IMR-90 (cell line): ENCODE measurements at regions of chr12 and their contacts with region 1.

Region 1: GRCh38 chr12:79555028-79555930 is 135.5 kb downstream of the PAWR start:
- DNase-seq: peak; percentile 79
- ATAC-seq: peak; percentile 75
- H3K4me3 ChIP-seq: no peak overlapping the region
- H3K27ac ChIP-seq: no peak overlapping the region; the same call in 1 of the 2 replicates
- H3K4me1 ChIP-seq: peaks cover 15% of the 10 kb centered on the region; the same call in 1 of the 2 replicates
- H3K27me3 ChIP-seq: no peaks in the 10 kb centered on the region
- CTCF ChIP-seq: peak; percentile 89
- POLR2A ChIP-seq: no peak; the same call in 1 of the 2 replicates
- RAD21 ChIP-seq: peak; percentile 87

Region 2: DNA sequence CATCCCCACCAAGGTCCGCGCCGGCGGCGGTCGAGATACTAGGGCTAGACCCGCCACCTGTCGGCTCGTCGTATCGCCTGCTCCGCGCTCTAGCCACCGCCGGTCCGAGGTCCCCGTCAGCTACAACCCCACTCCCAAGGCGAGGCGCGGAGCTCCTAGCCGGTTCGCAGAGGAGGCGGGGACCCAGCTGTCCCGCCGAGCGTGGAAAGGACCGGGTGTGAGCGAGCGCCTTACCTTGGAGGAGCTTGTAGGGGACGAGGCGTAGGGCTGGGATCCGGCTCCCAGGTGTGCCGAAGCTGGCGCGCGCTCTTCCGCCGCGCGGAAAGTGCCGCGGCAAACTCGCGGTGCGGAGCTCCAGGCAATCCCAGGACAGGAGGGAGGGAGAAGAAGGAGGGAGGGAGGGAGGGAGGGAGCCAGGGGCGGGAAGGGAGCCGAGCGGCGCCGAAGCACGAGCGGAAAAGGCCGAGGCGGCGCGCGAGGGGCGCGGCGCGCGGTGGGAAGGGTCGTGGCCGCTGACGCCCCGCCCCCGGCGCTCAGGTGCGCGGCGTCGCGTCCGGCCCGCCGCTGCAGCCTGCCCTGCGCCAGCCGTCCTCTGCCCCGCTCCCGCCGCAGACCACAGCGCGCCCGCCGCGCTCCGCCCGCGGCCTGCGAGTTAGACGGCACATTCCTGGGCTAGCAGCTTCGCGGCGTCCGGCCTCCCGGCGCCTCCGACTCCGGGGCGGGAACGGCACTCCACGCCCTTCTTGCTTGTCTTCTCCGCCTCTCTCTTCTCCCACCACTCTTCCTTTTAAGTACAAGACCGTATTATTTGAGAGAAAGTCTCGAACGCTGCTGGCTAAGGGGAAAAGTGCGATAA is 135.6 kb after region 1 on chr12 and contains the start of gene PAWR:
- CTCF ChIA-PET with region 1: no interaction called
- POLR2A ChIA-PET with region 1: no interaction called
- dilution Hi-C with region 1: no loop called
- in situ Hi-C with region 1: no loop called
- intact Hi-C with region 1: loop called (anchors 2 kb)
- DNase-seq: peak; percentile 93
- ATAC-seq: peak; percentile 60
- H3K4me3 ChIP-seq: peak within 1 kb of the TSS; percentile 96
- H3K27ac ChIP-seq: peak within 1 kb of the TSS; percentile 79
- H3K4me1 ChIP-seq: peaks cover 12% of the 10 kb centered on the region; the same call in 1 of the 2 replicates
- H3K27me3 ChIP-seq: no peaks in the 10 kb centered on the region
- CTCF ChIP-seq: peak; percentile 30
- POLR2A ChIP-seq: peak; percentile 80
- RAD21 ChIP-seq: no peak
- total RNA-seq, gene PAWR: 13.6 and 34.4 TPM in 2 replicates

Region 3: GRCh38 chr12:79886917-79887519 is 331.7 kb after region 1 on chr12:
- CTCF ChIA-PET with region 1: no interaction called
- POLR2A ChIA-PET with region 1: no interaction called
- dilution Hi-C with region 1: no loop called
- in situ Hi-C with region 1: no loop called
- intact Hi-C with region 1: loop called (anchors 5 kb)
- DNase-seq: peak; percentile 66
- ATAC-seq: peak; percentile 69
- H3K4me3 ChIP-seq: no peak overlapping the region
- H3K27ac ChIP-seq: no peak overlapping the region
- H3K4me1 ChIP-seq: peaks cover 2% of the 10 kb centered on the region
- H3K27me3 ChIP-seq: no peaks in the 10 kb centered on the region
- CTCF ChIP-seq: peak; percentile 57
- POLR2A ChIP-seq: no peak
- RAD21 ChIP-seq: peak; percentile 60

Region 4: DNA sequence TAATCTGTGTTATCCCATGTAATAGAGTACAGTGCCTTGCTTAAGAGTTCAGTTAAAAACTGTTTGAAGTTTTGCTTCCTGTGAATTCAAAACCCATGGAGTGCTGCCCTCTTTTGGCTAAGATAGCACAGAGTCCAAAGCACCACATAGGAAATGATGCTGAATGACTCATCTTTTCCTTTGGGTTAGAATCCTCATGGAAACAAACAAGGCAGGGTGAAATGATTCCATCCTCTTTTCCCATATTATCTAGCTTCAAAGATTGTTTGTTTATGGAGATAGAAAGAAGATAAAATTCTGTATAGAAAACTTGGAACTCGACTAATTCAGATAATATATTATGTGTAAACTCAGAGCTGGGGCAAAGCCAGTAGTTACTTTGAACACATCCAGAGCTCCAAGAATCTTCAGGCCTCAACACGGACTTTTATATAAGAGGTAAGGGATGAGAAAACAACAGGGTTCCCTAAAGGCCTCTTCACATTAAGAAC is 631.5 kb after region 1 on chr12:
- CTCF ChIA-PET with region 1: interaction called, 3 read pairs
- POLR2A ChIA-PET with region 1: no interaction called
- dilution Hi-C with region 1: no loop called
- in situ Hi-C with region 1: loop called (anchors 5 kb)
- intact Hi-C with region 1: loop called (anchors 1 kb)
- DNase-seq: peak; percentile 97
- ATAC-seq: peak; percentile 86
- H3K4me3 ChIP-seq: no peak overlapping the region
- H3K27ac ChIP-seq: peak overlapping the region; percentile 77
- H3K4me1 ChIP-seq: peaks cover 17% of the 10 kb centered on the region
- H3K27me3 ChIP-seq: no peaks in the 10 kb centered on the region
- CTCF ChIP-seq: peak; percentile 93
- POLR2A ChIP-seq: peak; percentile 55; the same call in 1 of the 2 replicates
- RAD21 ChIP-seq: peak; percentile 92

Region 5: GRCh38 chr12:80412369-80412953 is 857.2 kb after region 1 on chr12:
- CTCF ChIA-PET with region 1: no interaction called
- POLR2A ChIA-PET with region 1: no interaction called
- dilution Hi-C with region 1: no loop called
- in situ Hi-C with region 1: no loop called
- intact Hi-C with region 1: loop called (anchors 10 kb)
- DNase-seq: peak; percentile 69
- ATAC-seq: peak; percentile 81
- H3K4me3 ChIP-seq: no peak overlapping the region
- H3K27ac ChIP-seq: no peak overlapping the region
- H3K4me1 ChIP-seq: no peaks in the 10 kb centered on the region
- H3K27me3 ChIP-seq: no peaks in the 10 kb centered on the region
- CTCF ChIP-seq: peak; percentile 87
- POLR2A ChIP-seq: no peak
- RAD21 ChIP-seq: peak; percentile 94